ENCODE measurements at regions of chr5 and their contacts with region 1.

Region 1: DNA sequence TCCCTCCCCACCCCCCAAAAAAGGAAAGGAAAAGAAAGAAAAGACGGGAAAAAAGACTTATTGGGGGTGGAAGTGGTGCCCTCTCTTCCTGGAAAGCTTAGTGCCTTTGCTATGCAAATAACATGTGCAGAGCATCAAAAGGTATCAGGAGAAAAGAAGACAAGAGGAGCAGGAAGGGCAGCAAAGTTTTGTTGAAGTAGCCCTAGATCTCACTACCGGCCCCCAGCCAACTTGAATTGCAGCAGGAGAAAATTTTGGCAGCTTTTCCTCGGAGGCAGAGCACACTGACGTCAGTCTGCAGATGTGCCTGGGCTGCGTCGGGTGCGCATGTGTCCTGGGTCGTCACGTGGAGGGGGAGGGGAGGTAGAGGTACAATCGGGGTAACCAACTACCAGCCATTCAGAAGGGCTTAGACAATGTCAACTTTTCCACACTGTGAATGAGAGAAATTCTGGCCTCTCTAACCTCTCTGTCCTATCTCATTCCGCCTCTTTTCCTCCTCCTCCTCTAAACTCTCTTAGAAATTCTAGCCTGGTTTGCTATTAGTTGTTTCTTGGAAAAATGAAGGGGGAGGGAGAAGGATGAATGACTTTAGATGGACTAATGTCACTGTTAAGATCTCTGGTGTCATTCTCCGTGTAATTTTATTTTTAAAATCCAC is at the start of gene ADAMTS6:
- DNase-seq: peak; percentile 39 to 84 (median 72)
- ATAC-seq: peak; percentile 90
- H3K4me3 ChIP-seq: peak within 1 kb of the TSS; percentile 70
- H3K4me3 Mint-ChIP-seq: peak within 1 kb of the TSS in 2 of 10 donors; percentile 94
- H3K27ac ChIP-seq: peak within 1 kb of the TSS; percentile 73
- H3K27ac Mint-ChIP-seq: peak within 1 kb of the TSS in 8 of 9 donors; percentile 85 to 98 (median 92)
- H3K4me1 ChIP-seq: peaks cover 3 to 5% of the 10 kb centered on the region in 2 donors
- H3K4me1 Mint-ChIP-seq: peaks cover 5 to 20% (median 8%) of the 10 kb centered on the region in 7 donors
- H3K27me3 ChIP-seq: no peaks in the 10 kb centered on the region
- H3K27me3 Mint-ChIP-seq: peaks cover 0 to 7% (median 0%) of the 10 kb centered on the region in 5 donors
- total RNA-seq, gene ADAMTS6: 0.63 to 4.5 (median 2.6) TPM

Region 2: DNA sequence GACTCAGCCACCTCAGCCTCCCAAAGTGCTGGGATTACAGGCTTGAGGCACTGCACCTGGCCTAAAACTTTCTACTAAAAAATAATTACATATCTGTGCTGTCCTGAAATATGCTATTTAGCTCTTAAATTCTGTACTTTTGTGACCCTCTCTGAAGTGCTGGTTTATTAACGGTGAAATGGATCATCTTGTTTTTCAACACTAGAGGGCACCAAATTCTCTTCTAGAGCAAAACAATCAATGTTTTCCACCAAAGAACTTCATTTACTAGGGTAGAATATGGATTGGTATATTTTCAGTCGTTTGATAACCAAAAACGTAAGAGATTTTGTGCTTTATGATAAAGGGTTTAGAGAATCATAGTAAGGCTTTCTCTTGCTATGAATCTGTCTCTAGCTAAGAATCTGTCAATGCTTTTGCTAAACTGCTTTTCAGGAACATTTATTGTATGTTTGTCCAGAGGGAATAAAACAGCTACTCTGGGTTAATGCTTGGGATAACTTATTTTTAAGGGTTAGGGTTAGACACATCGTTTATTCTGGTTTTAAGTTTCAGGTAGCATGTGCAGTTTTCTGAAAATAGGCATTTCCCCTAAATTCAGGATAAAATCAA is 1252.5 kb before region 1 on chr5:
- CTCF ChIA-PET with region 1: interaction called, 3 read pairs
- POLR2A ChIA-PET with region 1: no interaction called
- intact Hi-C with region 1: loop called in 1 of 2 experiments (anchors 2 kb)
- DNase-seq: peak in 3 of 9 donors; percentile 2 to 15 (median 3)
- ATAC-seq: no peak
- H3K4me3 ChIP-seq: no peak overlapping the region
- H3K4me3 Mint-ChIP-seq: no peak overlapping the region
- H3K27ac ChIP-seq: no peak overlapping the region
- H3K27ac Mint-ChIP-seq: no peak overlapping the region
- H3K4me1 ChIP-seq: no peaks in the 10 kb centered on the region
- H3K4me1 Mint-ChIP-seq: no peaks in the 10 kb centered on the region
- H3K27me3 ChIP-seq: no peaks in the 10 kb centered on the region
- H3K27me3 Mint-ChIP-seq: peaks cover 0 to 10% (median 0%) of the 10 kb centered on the region in 5 donors

Region 3: DNA sequence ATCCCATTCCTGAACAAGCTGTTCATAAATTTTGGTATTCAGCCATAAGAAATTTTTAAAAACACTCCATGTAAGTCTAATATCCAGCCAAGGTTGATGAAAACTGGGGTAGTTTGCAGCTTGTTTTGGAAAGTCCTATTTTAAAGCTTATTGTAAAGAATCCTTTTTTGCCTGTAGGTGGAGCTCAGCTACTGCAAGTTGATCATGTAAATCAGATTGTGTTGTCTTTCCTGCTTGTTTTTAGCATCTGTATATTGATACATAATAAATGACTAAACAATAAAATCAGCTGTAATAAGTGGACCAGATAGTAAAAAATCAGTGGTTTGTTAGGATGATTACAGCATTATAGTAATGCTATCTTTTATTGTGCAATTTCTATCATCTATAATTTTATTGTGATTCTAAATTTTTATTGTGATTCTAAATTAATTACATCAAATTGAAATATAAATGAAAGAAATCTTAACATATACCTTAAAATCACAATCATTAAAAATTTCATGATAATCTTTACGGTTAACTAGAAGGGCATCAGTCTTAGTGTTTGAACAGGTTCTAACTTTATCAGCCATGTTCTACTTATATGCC is 670.6 kb before region 1 on chr5:
- CTCF ChIA-PET with region 1: interaction called, 26 read pairs
- POLR2A ChIA-PET with region 1: no interaction called
- intact Hi-C with region 1: loop called (anchors 1 kb)
- DNase-seq: peak in 7 of 9 donors; percentile 1 to 38 (median 21)
- ATAC-seq: peak; percentile 50
- H3K4me3 ChIP-seq: no peak overlapping the region
- H3K4me3 Mint-ChIP-seq: no peak overlapping the region
- H3K27ac ChIP-seq: no peak overlapping the region
- H3K27ac Mint-ChIP-seq: peak overlapping the region in 1 of 9 donors; percentile 33
- H3K4me1 ChIP-seq: no peaks in the 10 kb centered on the region
- H3K4me1 Mint-ChIP-seq: peaks cover 0 to 3% (median 0%) of the 10 kb centered on the region in 7 donors
- H3K27me3 ChIP-seq: no peaks in the 10 kb centered on the region
- H3K27me3 Mint-ChIP-seq: no peaks in the 10 kb centered on the region

Region 4: GRCh38 chr5:65076251-65076869 is 405.4 kb before region 1 on chr5:
- CTCF ChIA-PET with region 1: interaction called, 17 read pairs
- POLR2A ChIA-PET with region 1: no interaction called
- intact Hi-C with region 1: loop called (anchors 1 kb)
- DNase-seq: peak in 8 of 9 donors; percentile 26 to 66 (median 46)
- ATAC-seq: peak; percentile 89
- H3K4me3 ChIP-seq: no peak overlapping the region
- H3K4me3 Mint-ChIP-seq: no peak overlapping the region
- H3K27ac ChIP-seq: no peak overlapping the region
- H3K27ac Mint-ChIP-seq: peak overlapping the region in 5 of 9 donors; percentile 2 to 78 (median 39)
- H3K4me1 ChIP-seq: no peaks in the 10 kb centered on the region
- H3K4me1 Mint-ChIP-seq: peaks cover 2 to 23% (median 17%) of the 10 kb centered on the region in 7 donors
- H3K27me3 ChIP-seq: no peaks in the 10 kb centered on the region
- H3K27me3 Mint-ChIP-seq: peaks cover 0 to 17% (median 0%) of the 10 kb centered on the region in 5 donors

Region 5: GRCh38 chr5:65382582-65382981 is 99.2 kb before region 1 on chr5:
- CTCF ChIA-PET with region 1: no interaction called
- POLR2A ChIA-PET with region 1: no interaction called
- intact Hi-C with region 1: loop called in 1 of 2 experiments (anchors 5 kb)
- DNase-seq: no peak
- ATAC-seq: no peak
- H3K4me3 ChIP-seq: no peak overlapping the region
- H3K4me3 Mint-ChIP-seq: no peak overlapping the region
- H3K27ac ChIP-seq: no peak overlapping the region
- H3K27ac Mint-ChIP-seq: no peak overlapping the region
- H3K4me1 ChIP-seq: no peaks in the 10 kb centered on the region
- H3K4me1 Mint-ChIP-seq: no peaks in the 10 kb centered on the region
- H3K27me3 ChIP-seq: no peaks in the 10 kb centered on the region
- H3K27me3 Mint-ChIP-seq: no peaks in the 10 kb centered on the region

Region 6: DNA sequence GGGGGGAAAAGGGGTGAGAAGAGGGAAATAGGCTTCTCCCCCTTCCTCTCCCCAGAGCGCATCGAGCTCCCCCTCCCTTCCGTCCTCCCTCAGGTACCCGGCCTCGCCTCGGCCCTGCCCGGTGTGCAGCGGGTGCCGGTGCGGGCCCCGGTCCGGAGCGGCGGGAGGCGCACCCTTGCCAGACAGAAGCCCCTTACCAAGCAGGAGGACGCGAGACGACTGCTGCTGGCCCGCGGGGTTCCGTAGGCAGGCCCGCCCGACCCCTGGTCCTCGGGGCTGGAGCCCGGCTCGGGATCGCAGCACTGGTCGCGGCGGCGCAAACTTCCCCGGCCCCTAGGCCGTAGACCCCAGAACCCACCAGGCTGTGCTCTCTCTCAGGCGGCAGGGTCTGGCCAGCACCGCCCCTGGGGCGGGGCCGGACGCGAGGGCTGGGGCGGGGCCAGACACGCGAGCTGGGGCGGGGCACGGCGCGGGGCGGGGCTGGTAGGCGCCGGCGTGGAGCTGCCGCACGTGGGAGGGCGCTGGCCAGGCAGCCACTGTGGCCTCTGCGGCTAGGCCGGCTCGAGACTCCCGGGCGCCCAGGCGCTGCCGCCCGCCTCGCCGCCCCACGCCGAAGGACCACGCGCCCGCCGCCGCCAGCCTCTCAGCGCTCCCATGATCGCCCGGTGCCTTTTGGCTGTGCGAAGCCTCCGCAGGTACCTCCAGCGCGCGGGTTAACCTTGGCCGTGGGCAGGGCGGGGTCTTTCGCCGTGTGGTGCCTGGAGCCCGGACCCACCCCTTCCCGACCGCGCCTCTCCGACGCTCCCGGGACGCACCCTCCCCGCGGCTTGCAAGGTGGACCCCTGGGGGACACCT is 240.2 kb after region 1 on chr5 and contains the starts of genes NLN and SGTB:
- CTCF ChIA-PET with region 1: no interaction called
- POLR2A ChIA-PET with region 1: no interaction called
- intact Hi-C with region 1: loop called (anchors 2 to 5 kb)
- DNase-seq: peak; percentile 65 to 93 (median 83)
- ATAC-seq: peak; percentile 97
- H3K4me3 ChIP-seq: peak within 1 kb of the TSS; percentile 75
- H3K4me3 Mint-ChIP-seq: peak within 1 kb of the TSS in 6 of 10 donors; percentile 85 to 97 (median 92)
- H3K27ac ChIP-seq: peak within 1 kb of the TSS; percentile 97
- H3K27ac Mint-ChIP-seq: peak within 1 kb of the TSS; percentile 74 to 91 (median 86)
- H3K4me1 ChIP-seq: peaks cover 22 to 33% of the 10 kb centered on the region in 2 donors
- H3K4me1 Mint-ChIP-seq: peaks cover 9 to 36% (median 15%) of the 10 kb centered on the region in 7 donors
- H3K27me3 ChIP-seq: no peaks in the 10 kb centered on the region
- H3K27me3 Mint-ChIP-seq: no peaks in the 10 kb centered on the region
- total RNA-seq, gene NLN: 3.5 to 11.9 (median 4.1) TPM
- total RNA-seq, gene SGTB: 12.8 to 59.5 (median 50.8) TPM